PC-9 (cell line): ENCODE measurements at regions of chr4 and their contacts with region 1.

Region 1: GRCh38 chr4:1726146-1726934 is 5.0 kb downstream of the TACC3 start:
- DNase-seq: peak; percentile 88 to 90
- H3K4me3 ChIP-seq: no peak overlapping the region
- H3K27ac ChIP-seq: peak overlapping the region; percentile 94
- H3K4me1 ChIP-seq: peaks cover 71% of the 10 kb centered on the region
- H3K27me3 ChIP-seq: no peaks in the 10 kb centered on the region
- CTCF ChIP-seq: peak; percentile 97

Region 2: DNA sequence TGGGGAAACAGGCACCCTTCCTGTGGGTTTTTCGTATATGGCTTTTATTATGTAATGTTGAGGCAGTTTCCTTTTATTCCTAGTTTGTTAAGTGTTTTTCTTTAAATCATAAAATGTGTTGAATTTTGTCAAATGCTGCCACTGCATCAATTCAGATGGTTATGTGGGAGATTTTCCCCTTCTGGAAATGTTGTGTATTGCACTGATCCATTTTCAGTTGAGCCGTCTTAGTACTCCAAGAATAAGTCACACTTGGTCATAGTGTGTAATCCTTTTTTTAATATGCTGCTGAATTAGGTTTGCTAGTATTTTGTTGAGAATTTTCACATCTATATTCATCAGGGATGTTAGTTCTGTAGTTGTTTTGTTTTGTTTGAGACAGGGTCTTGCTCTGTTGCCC is 467.9 kb before region 1 on chr4:
- CTCF ChIA-PET with region 1: no interaction called
- POLR2A ChIA-PET with region 1: no interaction called
- intact Hi-C with region 1: no loop called
- DNase-seq: no peak
- H3K4me3 ChIP-seq: no peak overlapping the region
- H3K27ac ChIP-seq: no peak overlapping the region
- H3K4me1 ChIP-seq: no peaks in the 10 kb centered on the region
- H3K27me3 ChIP-seq: peaks cover 36% of the 10 kb centered on the region
- CTCF ChIP-seq: peak; percentile 27; the same call in 1 of the 2 replicates

Region 3: GRCh38 chr4:1355378-1355777 is 371.0 kb before region 1 on chr4:
- CTCF ChIA-PET with region 1: no interaction called
- POLR2A ChIA-PET with region 1: no interaction called
- intact Hi-C with region 1: no loop called
- DNase-seq: no peak
- H3K4me3 ChIP-seq: no peak overlapping the region
- H3K27ac ChIP-seq: no peak overlapping the region
- H3K4me1 ChIP-seq: no peaks in the 10 kb centered on the region
- H3K27me3 ChIP-seq: no peaks in the 10 kb centered on the region
- CTCF ChIP-seq: no peak

Region 4: DNA sequence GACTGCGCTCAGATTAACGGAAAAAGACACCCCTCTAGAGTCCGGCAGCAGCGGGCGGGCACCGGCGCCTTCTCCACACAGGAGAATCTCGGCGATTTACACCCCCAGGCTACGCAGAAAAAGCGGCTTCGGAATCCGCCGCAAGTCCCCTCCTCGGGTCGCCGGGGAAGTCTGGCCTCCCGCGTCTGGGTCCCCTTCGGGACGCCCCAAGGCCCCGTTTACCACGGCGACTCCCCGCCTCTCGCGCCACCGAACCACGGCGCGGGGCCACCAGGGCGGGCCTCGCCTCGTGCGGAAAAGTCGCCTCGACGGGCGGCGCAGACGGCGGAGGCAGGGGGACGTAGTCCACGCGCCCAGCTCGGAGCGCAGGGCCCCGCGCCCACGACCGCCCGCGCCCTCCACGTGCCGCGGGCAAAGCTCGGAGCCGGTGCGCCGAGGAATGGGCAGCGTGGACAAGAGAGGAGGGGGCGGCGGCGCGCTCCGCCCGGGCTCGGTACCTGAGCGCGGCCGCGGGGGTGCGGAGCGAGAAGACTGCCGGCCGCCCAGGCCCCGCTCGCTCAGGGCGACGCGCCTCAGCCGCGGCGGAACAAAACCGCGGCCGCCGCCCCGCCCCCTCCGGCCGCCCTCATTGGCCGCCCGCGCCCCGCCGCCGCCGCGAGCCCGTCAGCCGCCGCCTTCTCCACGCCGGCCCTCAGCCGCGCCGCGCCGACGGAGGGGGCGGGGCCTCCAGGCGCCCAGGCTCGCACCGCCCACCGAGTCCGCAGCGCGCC is 42.4 kb before region 1 on chr4 and contains the start of gene FAM53A:
- CTCF ChIA-PET with region 1: no interaction called
- POLR2A ChIA-PET with region 1: no interaction called
- intact Hi-C with region 1: loop called (anchors 2 kb)
- DNase-seq: peak; percentile 56 to 96
- H3K4me3 ChIP-seq: peak within 1 kb of the TSS; percentile 62
- H3K27ac ChIP-seq: no peak within 1 kb of the TSS
- H3K4me1 ChIP-seq: 0 out of 2 replicates have a peak, but pooled peaks cover 5% of the 10 kb centered on the region
- H3K27me3 ChIP-seq: no peaks in the 10 kb centered on the region
- CTCF ChIP-seq: no peak
- total RNA-seq, gene FAM53A: 4.0 and 6.7 TPM in 2 replicates

Region 5: GRCh38 chr4:1693129-1693896 is 33.0 kb before region 1 on chr4:
- CTCF ChIA-PET with region 1: interaction called, 7 read pairs
- POLR2A ChIA-PET with region 1: interaction called, 4 read pairs
- intact Hi-C with region 1: loop called (anchors 1 kb)
- DNase-seq: peak; percentile 60 to 76
- H3K4me3 ChIP-seq: no peak overlapping the region
- H3K27ac ChIP-seq: no peak overlapping the region; the same call in 1 of the 2 replicates
- H3K4me1 ChIP-seq: no peaks in the 10 kb centered on the region
- H3K27me3 ChIP-seq: no peaks in the 10 kb centered on the region
- CTCF ChIP-seq: peak; percentile 93

Region 6: DNA sequence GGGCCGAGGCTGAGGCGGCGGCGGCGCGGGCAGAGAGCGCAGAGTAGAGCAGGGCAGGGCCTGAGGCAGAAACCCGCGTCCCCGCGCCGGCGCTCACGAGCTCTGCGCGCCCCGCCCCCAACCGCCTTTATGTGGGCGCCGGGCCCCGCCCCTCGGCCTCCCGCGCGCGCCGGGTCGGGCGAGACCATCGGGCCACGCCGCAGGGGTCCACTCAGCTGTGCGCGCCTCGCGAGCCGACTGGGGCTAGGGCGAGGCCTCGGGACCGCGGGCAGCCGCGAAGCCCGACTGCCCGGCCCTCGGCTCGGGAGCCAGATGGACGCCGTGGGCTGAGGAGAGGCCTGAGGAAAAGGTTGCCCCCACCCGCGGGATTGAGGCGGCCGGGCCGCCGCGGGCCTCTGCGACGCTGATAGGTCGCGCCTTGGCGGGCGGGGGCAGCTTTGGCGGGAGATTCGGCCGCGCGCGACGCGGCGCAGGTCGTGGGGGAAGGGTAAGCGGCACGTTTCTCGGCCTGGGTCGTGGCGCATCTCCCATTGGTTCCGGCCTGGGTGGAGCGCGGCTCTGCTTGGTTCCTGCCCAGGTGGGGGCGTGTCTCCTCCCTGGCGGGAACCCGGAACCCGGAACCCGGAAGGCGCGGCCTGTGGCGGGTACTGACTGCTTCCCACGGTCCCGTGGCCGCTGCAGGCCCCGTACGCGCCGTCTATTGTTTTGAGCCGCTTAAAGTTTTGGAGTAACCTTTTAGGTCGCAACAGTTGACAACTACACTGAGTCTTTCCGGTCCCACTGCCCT is 13.9 kb before region 1 on chr4 and contains the start of gene SLBP:
- CTCF ChIA-PET with region 1: no interaction called
- POLR2A ChIA-PET with region 1: interaction called, 6 read pairs
- intact Hi-C with region 1: loop called (anchors 2 kb)
- DNase-seq: peak; percentile 90 to 98
- H3K4me3 ChIP-seq: peak within 1 kb of the TSS; percentile 71
- H3K27ac ChIP-seq: peak within 1 kb of the TSS; percentile 96
- H3K4me1 ChIP-seq: peaks cover 20% of the 10 kb centered on the region
- H3K27me3 ChIP-seq: no peaks in the 10 kb centered on the region
- CTCF ChIP-seq: no peak
- total RNA-seq, gene SLBP: 61.7 and 63.4 TPM in 2 replicates

Region 7: GRCh38 chr4:1777822-1778641 is 51.7 kb after region 1 on chr4:
- CTCF ChIA-PET with region 1: interaction called, 4 read pairs
- POLR2A ChIA-PET with region 1: interaction called, 4 read pairs
- intact Hi-C with region 1: loop called (anchors 5 kb)
- DNase-seq: peak; percentile 86 to 95
- H3K4me3 ChIP-seq: no peak overlapping the region; the same call in 1 of the 2 replicates
- H3K27ac ChIP-seq: no peak overlapping the region
- H3K4me1 ChIP-seq: peaks cover 48% of the 10 kb centered on the region
- H3K27me3 ChIP-seq: no peaks in the 10 kb centered on the region
- CTCF ChIP-seq: no peak; the same call in 1 of the 2 replicates